ENCODE measurements at regions of chr4 and their contacts with region 1.

Region 1: GRCh38 chr4:15162465-15163283 is 160.4 kb downstream of the CPEB2 start:
- DNase-seq: no peak

Region 2: DNA sequence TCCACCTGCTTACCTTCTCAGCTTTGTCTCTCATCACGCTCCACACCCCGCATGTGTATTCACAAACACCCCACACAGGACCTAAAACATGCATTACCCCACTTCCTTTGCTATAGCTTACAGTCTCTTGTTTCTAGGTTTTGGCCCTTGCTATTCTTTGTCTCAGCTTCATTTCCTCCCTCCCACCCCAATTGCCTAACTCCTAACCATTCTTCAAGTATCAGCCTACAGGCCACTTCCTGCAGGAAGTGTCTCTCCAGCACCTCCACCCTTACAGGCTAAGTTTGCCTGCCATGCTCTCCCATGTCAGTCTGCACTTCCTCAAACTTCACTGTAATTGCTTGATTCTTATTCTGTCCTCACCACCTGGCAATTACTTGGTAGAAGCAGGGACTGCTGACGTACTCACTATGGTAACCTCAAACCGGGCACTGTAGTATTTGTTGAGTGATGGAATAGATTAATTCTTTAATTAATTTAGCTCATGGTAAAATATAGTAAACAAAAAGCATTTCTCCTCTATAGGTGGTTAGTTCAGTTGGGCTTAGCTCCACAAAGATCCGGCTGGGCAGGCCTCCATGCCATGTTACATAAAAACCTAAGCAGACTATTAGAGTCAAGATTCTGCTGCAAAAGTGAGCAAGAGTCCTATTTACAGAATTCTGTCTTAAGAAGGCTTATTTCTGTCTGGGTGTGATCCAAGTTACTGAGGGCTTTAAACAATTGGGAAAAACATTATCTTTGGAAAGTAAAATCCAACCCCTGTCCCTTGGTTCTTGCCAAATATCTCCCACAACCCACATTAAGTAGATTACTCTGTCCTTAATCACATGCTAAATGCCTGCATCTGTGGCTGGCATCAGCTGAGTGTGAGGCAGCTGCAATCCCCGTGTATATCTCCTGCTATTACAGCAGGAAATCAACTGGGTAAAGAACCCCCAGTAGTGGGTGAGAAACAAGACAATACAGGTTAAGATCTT is 285.1 kb before region 1 on chr4:
- intact Hi-C with region 1: loop called (anchors 5 kb)
- DNase-seq: no peak

Measured in posterior cingulate gyrus (tissue), 11 donors.